GM12878 (cell line): ENCODE measurements at regions of chr14 and their contacts with region 1.

Region 1: GRCh38 chr14:71988939-71989338 is 56.7 kb downstream of the RGS6 start:
- DNase-seq: no peak
- ATAC-seq: no peak
- H3K4me3 ChIP-seq: no peak overlapping the region
- H3K27ac ChIP-seq: no peak overlapping the region
- H3K4me1 ChIP-seq: no peaks in the 10 kb centered on the region
- H3K27me3 ChIP-seq: no peaks in the 10 kb centered on the region
- CTCF ChIP-seq: no peak
- EP300 ChIP-seq: no peak
- POLR2A ChIP-seq: no peak
- RAD21 ChIP-seq: no peak

Region 2: DNA sequence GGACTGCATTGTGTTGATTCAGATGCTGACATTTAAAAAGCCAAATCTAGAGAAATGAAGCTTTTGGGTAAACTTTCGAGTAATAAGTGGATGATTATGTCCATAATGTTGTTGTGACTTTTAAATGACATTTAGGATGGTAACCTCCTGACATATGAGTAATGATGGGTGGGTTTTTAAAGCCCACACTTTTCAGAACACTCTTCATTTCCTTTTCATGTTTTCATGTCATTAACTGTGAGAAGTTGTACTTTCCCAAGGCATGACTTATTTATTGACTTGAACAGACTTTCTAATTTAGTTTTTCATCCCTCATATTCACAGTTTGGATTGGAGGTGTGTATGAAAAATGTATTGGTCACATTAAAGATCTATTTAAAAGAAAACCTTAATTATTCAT is 21.2 kb before region 1 on chr14:
- CTCF ChIA-PET with region 1: interaction called, 3 read pairs
- POLR2A ChIA-PET with region 1: interaction called, 4 read pairs
- RAD21 ChIA-PET with region 1: interaction called, 9 read pairs
- SMC1A ChIA-PET with region 1: interaction called, 18 read pairs
- in situ Hi-C with region 1: no loop called
- intact Hi-C with region 1: no loop called
- DNase-seq: no peak
- ATAC-seq: peak; percentile 79
- H3K4me3 ChIP-seq: 0 out of 2 replicates have a peak overlapping the region, but pooled peaks have one; percentile 17
- H3K27ac ChIP-seq: peak overlapping the region; percentile 75
- H3K4me1 ChIP-seq: peaks cover 13% of the 10 kb centered on the region
- H3K27me3 ChIP-seq: no peaks in the 10 kb centered on the region
- CTCF ChIP-seq: no peak
- EP300 ChIP-seq: peak; percentile 54 to 62; a peak in 1 of 4 replicates
- POLR2A ChIP-seq: no peak
- RAD21 ChIP-seq: no peak

Region 3: GRCh38 chr14:72000907-72001306 is 12.0 kb after region 1 on chr14:
- CTCF ChIA-PET with region 1: interaction called, 7 read pairs
- POLR2A ChIA-PET with region 1: interaction called, 25 read pairs
- RAD21 ChIA-PET with region 1: interaction called, 4 read pairs
- SMC1A ChIA-PET with region 1: interaction called, 11 read pairs
- in situ Hi-C with region 1: no loop called
- intact Hi-C with region 1: no loop called
- DNase-seq: peak; percentile 34
- ATAC-seq: peak; percentile 93
- H3K4me3 ChIP-seq: no peak overlapping the region
- H3K27ac ChIP-seq: peak overlapping the region; percentile 27; the same call in 1 of the 2 replicates
- H3K4me1 ChIP-seq: no peaks in the 10 kb centered on the region
- H3K27me3 ChIP-seq: no peaks in the 10 kb centered on the region
- CTCF ChIP-seq: no peak
- EP300 ChIP-seq: peak; percentile 65 to 74; a peak in 3 of 4 replicates
- POLR2A ChIP-seq: no peak
- RAD21 ChIP-seq: no peak